ENCODE measurements at regions of chr19 and their contacts with region 1.

Region 1: GRCh38 chr19:38634757-38635482 is 12.5 kb upstream of the ACTN4 start:
- DNase-seq: peak; percentile 91

Region 2: GRCh38 chr19:38402967-38403861 is 231.7 kb before region 1 on chr19 and contains the start of gene FAM98C:
- intact Hi-C with region 1: loop called (anchors 2 kb)
- DNase-seq: peak; percentile 99
- total RNA-seq, gene FAM98C: 14.2 TPM

Region 3: GRCh38 chr19:38544034-38544958 is 90.6 kb before region 1 on chr19:
- intact Hi-C with region 1: loop called (anchors 5 kb)
- DNase-seq: no peak

Region 4: DNA sequence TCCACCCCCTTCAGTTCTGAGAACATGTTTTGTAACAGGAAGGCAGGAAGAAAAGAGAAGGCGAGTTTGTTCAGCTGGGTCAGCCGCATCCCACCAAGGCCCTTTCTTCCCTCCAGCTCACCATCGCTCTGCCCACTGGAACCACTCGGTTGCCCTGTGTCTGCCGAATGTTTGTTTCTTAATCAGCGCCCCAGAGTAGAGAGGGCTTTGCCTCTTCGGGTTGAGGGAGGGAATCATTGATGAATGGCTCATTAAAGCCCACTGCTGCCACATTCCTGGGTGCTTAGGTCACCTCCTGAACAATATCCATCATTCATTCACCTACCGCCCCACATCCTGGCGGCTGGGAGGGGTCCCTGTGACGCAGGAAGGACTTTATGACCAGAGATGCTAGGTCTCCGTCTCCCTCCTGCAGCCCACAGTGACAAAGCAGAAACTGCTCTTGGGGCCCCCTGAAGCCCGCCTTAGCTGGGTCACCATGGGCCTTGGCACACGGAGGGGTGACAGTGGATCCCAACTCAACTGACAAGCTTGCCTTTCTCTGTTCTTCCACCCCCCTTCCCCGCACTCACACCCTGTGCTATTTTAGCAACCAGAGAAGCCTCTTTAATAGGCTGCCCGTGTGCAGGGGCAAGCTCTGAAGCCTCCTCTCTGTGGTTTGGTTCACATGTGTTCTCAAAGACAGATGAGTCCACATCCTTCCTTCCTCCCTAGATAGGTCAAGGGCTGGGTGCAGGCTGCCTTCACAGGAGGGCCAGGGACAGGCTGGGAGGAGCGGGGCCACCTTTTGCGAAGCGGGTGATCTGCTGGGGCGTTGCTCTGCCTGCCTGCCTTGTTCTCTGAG is 58.7 kb after region 1 on chr19:
- intact Hi-C with region 1: no loop called
- DNase-seq: peak; percentile 77

Measured in cardiac septum (tissue), 1 donor.